ENCODE measurements at regions of chr18 and their contacts with region 1.

Region 1: DNA sequence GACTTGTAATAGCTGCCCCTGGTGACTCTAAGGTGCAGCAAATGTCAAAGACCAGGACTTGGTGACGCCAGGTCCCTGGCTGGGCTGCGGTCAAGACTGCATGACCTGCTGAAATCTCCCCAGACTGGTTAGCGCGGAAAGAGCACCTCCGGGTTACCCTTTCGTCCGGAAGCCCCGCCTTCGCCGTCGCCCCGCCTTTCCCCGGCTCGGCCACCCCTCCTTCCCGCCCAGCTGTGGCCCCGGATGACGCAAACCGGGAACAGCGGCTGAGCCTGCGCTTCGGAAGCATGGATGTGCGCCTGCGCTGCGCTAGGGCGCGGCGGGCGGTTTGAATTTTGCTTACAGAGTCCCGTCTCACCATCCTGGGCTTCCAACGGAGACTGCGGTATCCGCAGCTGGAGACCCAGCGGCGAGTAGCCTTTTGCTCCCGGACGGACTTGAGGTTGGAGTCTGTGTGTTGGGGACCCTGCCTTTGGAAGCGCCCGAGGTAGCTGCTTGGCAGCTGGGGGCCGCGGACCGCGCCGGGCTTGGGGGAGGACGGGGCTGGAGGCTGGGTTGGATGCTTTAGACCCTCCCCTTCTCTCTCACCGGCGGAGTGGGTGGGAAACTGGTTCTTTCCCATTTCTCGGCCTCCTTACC is at the start of gene SKA1:
- DNase-seq: peak; percentile 80 to 98 (median 91)

Region 2: DNA sequence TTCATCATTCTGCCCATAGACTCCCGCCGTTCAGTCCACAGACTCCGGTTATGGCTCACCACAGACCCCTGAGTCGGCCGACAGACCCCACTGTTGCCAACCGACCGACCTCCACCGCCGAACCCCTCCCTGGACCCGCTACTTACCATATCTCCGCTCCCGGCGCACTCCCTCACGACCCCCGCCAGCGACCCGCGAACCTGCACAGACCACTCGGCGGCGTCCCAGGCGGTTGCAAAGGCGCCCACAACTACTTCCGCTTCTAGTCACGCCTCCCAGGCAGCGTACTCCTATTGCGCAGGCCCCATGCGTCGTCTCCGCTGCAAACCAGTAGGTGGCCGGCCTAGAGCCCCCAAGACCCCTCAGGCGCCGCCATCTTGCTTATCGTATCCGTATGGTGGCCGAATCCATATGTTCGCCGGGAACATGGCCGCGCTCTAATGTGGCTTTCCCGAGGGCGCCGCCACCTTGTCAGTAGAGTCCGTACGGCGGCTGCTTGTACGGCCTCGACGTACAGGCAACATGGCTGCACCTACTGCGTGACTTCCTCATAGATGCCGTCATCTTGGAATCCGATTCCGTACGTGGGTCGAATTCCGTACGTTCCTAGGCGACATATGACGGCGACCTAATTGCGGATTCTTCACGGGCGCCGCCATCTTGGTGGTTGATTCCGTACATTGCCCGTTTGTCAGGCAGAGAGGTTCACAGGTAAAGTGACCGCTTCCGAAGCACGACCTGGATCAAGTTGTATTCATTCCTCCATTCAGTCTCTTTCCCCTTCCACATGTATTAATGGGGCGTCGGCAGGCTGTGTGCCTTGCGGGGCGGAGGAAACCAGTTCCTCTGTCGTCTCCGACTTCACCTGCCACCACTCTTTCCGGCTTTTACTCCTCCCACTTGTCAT is 87.2 kb before region 1 on chr18 and contains the start of gene CXXC1:
- intact Hi-C with region 1: loop called (anchors 2 kb)
- DNase-seq: peak; percentile 93 to 100 (median 98)

Region 3: GRCh38 chr18:50518788-50519546 is 144.1 kb after region 1 on chr18:
- intact Hi-C with region 1: no loop called
- DNase-seq: no peak

Region 4: DNA sequence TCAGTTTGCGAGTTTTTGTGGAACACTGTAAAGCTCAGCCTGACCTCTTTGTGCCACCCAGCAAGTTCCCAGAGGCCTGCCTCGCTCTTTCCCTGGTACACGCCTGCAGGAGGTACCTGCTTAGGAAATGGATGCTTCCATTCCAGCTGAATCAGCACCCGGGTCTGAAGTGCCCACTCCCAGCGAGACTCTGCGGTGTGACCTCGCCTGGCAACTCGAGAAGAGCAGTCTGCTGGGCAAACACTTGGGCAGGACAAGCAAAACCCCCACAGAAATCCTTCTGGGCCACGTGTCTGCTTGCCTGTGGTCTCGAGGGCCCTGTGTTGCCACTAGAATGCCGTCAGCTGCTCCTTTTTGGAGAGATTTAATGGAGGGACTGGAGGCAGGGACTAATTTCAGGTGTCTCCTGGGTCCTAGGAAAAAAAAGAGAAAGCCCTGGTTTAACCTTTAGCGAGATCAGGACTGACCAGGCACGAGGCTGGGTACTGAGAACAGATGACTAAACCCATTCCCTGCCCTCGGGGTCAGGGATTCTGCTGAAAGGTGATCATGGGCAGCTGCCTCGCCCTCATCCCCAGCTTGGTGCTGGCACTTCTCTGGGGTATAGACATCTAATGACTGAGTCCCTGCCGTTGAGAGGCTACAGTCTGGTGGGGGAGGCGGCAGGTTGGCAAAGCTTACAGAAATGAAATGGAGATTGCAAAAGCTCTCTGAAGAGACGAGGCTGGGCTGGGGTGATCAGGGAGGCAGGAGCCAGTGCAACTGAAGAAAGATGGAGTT is 312.8 kb after region 1 on chr18:
- intact Hi-C with region 1: no loop called
- DNase-seq: no peak

Measured in posterior cingulate gyrus (tissue), 11 donors.